Calu3 (cell line): ENCODE measurements at regions of chr1 and their contacts with region 1.

Region 1: DNA sequence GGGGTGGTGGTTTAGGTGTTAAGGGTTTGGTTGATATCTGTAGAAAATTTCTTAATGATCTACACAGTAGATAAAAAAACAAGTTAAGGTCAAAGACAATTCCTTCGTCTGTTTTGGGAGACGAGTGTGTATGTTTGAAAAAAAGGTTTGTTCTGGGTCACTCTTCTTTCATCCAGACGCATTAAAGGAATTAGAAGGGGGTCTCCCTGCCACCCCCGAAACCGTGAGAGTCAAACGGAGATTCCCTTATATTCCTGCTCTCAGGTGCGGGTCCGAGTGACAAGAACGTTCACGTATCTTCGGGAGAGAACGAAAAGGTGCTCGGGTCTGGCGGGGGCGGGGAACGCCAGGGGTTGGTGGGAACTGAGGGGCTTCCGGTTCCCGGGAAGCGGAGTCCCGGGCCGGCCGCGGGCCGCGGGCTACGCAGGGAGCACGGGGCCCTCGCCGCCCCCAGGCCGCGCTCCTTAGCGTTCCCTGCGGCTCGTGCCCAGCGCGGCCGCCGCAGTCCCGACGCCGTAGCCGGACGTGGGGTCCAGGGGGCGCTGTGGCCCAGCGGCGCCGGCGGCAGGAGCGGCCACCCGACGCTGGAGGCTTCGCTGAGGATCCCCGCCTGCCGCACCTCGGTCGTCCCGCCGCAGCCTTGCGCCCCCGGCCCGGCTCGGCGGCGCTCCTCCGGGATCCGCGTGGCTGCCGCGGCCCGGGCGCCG is at the start of gene ZFYVE9:
- DNase-seq: peak; percentile 90
- H3K4me3 Mint-ChIP-seq: peak within 1 kb of the TSS; percentile 79
- H3K27ac Mint-ChIP-seq: peak within 1 kb of the TSS; percentile 56
- H3K4me1 Mint-ChIP-seq: peaks cover 18% of the 10 kb centered on the region
- H3K27me3 Mint-ChIP-seq: no peaks in the 10 kb centered on the region
- CTCF ChIP-seq: peak; percentile 65
- total RNA-seq, gene ZFYVE9: 9.0 and 13.6 TPM in 2 replicates

Region 2: GRCh38 chr1:51916587-51917405 is 224.9 kb before region 1 on chr1:
- CTCF ChIA-PET with region 1: no interaction called
- intact Hi-C with region 1: no loop called
- DNase-seq: no peak
- H3K4me3 Mint-ChIP-seq: no peak overlapping the region
- H3K27ac Mint-ChIP-seq: no peak overlapping the region
- H3K4me1 Mint-ChIP-seq: no peaks in the 10 kb centered on the region
- H3K27me3 Mint-ChIP-seq: peaks cover 86% of the 10 kb centered on the region
- CTCF ChIP-seq: no peak

Region 3: GRCh38 chr1:52365746-52366516 is 224.3 kb after region 1 on chr1 and contains the start of gene CC2D1B:
- CTCF ChIA-PET with region 1: no interaction called
- intact Hi-C with region 1: loop called (anchors 5 kb)
- DNase-seq: peak; percentile 100
- H3K4me3 Mint-ChIP-seq: peak within 1 kb of the TSS; percentile 92
- H3K27ac Mint-ChIP-seq: peak within 1 kb of the TSS; percentile 96
- H3K4me1 Mint-ChIP-seq: peaks cover 37% of the 10 kb centered on the region
- H3K27me3 Mint-ChIP-seq: no peaks in the 10 kb centered on the region
- CTCF ChIP-seq: peak; percentile 18
- total RNA-seq, gene CC2D1B: 41.0 and 42.6 TPM in 2 replicates